ENCODE measurements at regions of chr4 and their contacts with region 1.

Region 1: GRCh38 chr4:48602222-48602621 is 112.2 kb downstream of the ZAR1 start:
- DNase-seq: no peak
- ATAC-seq: no peak
- H3K4me3 ChIP-seq: no peak overlapping the region
- H3K27ac ChIP-seq: no peak overlapping the region
- H3K4me1 ChIP-seq: peaks cover 0 to 17% (median 8%) of the 10 kb centered on the region in 9 donors
- H3K27me3 ChIP-seq: no peaks in the 10 kb centered on the region
- CTCF ChIP-seq: no peak

Region 2: DNA sequence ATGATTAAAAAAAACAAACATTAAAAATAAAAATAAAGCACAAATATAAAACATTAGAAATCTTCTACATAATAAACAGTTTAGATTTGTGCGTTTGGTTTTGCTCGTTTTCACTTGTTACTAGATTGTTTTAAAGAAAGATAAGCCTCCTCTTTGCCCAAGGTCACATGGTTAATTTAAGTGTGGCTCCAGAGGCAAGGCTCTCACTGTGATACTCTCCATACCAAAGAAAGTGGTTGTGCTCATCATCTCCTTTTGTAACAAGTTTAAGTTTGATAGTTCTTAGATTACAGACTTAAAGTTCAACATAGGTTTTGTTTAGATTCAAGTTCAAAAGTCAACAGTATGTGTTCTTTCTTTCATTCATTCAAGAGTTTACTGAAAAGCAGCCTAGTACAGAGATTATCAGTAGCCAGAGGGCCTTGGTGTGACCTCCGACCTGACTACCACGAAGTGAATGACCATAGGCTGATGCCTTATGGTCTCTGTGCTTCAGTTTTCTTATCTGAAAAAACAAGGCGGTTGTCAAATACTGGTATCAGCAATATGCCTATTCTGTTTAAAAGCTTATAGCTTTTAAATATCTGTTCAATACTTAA is 21.1 kb after region 1 on chr4:
- intact Hi-C with region 1: loop called in 1 of 10 experiments (anchors 2 kb)
- DNase-seq: no peak
- ATAC-seq: no peak
- H3K4me3 ChIP-seq: no peak overlapping the region
- H3K27ac ChIP-seq: no peak overlapping the region
- H3K4me1 ChIP-seq: peaks cover 0 to 55% (median 5%) of the 10 kb centered on the region in 9 donors
- H3K27me3 ChIP-seq: no peaks in the 10 kb centered on the region
- CTCF ChIP-seq: no peak

Region 3: GRCh38 chr4:48642421-48643374 is 40.5 kb after region 1 on chr4:
- intact Hi-C with region 1: loop called in 1 of 10 experiments (anchors 5 kb)
- DNase-seq: no peak
- ATAC-seq: peak in 1 of 8 donors; percentile 23
- H3K4me3 ChIP-seq: no peak overlapping the region
- H3K27ac ChIP-seq: peak overlapping the region in 7 of 10 donors; percentile 2 to 57 (median 31)
- H3K4me1 ChIP-seq: peaks cover 3 to 63% (median 39%) of the 10 kb centered on the region in 9 donors
- H3K27me3 ChIP-seq: no peaks in the 10 kb centered on the region
- CTCF ChIP-seq: no peak

Region 4: DNA sequence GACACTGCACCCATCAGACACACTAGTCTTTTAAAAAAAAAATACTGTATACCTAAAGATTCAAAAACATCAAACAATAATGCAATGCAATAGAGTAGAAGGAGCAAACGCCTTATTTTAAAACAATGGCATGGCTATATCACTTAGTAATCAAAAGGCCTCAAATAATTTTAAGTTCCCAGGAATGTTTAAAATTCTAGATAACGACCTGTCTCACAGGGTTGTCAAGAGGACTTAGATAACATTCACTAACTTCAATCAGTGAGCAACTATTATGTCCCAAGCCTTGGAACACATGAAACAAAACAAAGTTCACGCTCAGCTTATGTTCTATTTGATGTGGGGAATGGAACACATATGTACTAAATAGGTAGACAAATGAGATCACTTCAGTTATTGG is 71.3 kb after region 1 on chr4:
- intact Hi-C with region 1: loop called in 1 of 10 experiments (anchors 10 kb)
- DNase-seq: no peak
- ATAC-seq: no peak
- H3K4me3 ChIP-seq: no peak overlapping the region
- H3K27ac ChIP-seq: no peak overlapping the region
- H3K4me1 ChIP-seq: peaks cover 0 to 26% (median 9%) of the 10 kb centered on the region in 9 donors
- H3K27me3 ChIP-seq: no peaks in the 10 kb centered on the region
- CTCF ChIP-seq: no peak